Activated CD8-positive, alpha-beta T cell treated with anti-CD3 and anti-CD28 coated beads for 36 hours (primary cell): ENCODE measurements at regions of chr1 and their contacts with region 1.

Region 1: GRCh38 chr1:179809506-179810366 is 66.6 kb downstream of the FAM163A start:
- DNase-seq: peak; percentile 76
- ATAC-seq: peak; percentile 83
- H3K4me3 Mint-ChIP-seq: no peak overlapping the region
- H3K27ac Mint-ChIP-seq: no peak overlapping the region
- H3K4me1 Mint-ChIP-seq: peaks cover 4% of the 10 kb centered on the region
- H3K27me3 Mint-ChIP-seq: peaks cover 2% of the 10 kb centered on the region
- CTCF ChIP-seq: peak; percentile 87

Region 2: GRCh38 chr1:179706339-179706941 is 103.3 kb before region 1 on chr1:
- CTCF ChIA-PET with region 1: interaction called, 634 read pairs
- POLR2A ChIA-PET with region 1: interaction called, 7 read pairs
- intact Hi-C with region 1: loop called (anchors 1 kb)
- DNase-seq: peak; percentile 68
- ATAC-seq: no peak
- H3K4me3 Mint-ChIP-seq: no peak overlapping the region
- H3K27ac Mint-ChIP-seq: no peak overlapping the region
- H3K4me1 Mint-ChIP-seq: peaks cover 6% of the 10 kb centered on the region
- H3K27me3 Mint-ChIP-seq: no peaks in the 10 kb centered on the region
- CTCF ChIP-seq: peak; percentile 80

Region 3: DNA sequence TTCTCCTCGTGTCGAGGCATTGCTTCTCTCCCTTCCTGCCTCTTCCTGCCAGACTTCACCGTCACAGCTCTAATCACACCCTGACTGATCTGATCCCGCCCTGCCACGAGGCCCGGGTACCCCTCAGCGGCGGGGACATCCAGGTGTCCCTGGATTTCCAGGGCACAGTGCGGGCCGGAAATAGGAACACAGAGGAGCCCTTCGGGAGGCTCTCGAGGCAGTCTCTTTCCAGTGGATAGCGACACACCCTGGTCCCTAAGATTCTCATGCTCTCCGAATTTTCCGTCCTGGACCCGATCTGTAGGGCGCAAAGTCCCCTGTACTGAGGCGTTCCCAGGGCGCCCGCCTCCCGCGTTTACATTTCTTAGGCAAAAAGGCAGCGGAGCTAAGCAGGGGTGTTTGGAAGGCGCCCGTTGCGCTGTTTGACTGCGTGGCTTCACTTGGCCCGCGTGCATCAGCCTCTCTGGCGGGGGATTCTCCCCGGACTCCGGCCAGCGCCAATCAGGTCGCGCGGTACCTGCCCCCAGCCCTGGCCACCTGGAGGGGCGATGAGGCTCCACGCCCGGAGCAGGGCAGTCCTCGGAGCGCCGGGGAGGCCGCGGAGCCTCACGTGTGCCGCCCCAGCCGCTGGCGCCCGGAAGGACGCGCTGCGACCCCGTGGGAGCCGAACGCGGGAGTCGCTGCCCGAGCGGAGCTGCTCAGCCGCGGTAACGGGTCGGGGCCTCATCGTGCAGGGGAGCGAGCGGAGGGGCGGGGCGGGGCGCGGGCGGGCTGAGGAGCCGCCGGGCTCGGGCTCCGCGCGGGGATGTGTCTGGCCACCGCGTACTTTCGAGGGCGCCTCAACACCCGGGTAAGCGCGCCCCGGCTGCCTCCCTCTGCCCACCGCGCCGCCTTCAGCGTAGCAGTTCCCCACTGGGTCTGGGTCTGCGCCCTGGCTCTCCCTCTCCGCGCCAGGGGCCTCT is 66.7 kb before region 1 on chr1 and contains the start of gene FAM163A:
- CTCF ChIA-PET with region 1: interaction called, 20 read pairs
- POLR2A ChIA-PET with region 1: no interaction called
- intact Hi-C with region 1: no loop called
- DNase-seq: peak; percentile 20
- ATAC-seq: peak; percentile 42
- H3K4me3 Mint-ChIP-seq: peak within 1 kb of the TSS; percentile 2
- H3K27ac Mint-ChIP-seq: no peak within 1 kb of the TSS
- H3K4me1 Mint-ChIP-seq: peaks cover 5% of the 10 kb centered on the region
- H3K27me3 Mint-ChIP-seq: peaks cover 59% of the 10 kb centered on the region
- CTCF ChIP-seq: no peak
- total RNA-seq, gene FAM163A: not detected

Region 4: GRCh38 chr1:179785031-179785431 is 24.7 kb before region 1 on chr1:
- CTCF ChIA-PET with region 1: interaction called, 22 read pairs
- POLR2A ChIA-PET with region 1: no interaction called
- intact Hi-C with region 1: no loop called
- DNase-seq: no peak
- ATAC-seq: no peak
- H3K4me3 Mint-ChIP-seq: no peak overlapping the region
- H3K27ac Mint-ChIP-seq: no peak overlapping the region
- H3K4me1 Mint-ChIP-seq: no peaks in the 10 kb centered on the region
- H3K27me3 Mint-ChIP-seq: peaks cover 3% of the 10 kb centered on the region
- CTCF ChIP-seq: no peak

Region 5: GRCh38 chr1:179831852-179832699 is 22.3 kb after region 1 on chr1:
- CTCF ChIA-PET with region 1: interaction called, 28 read pairs
- POLR2A ChIA-PET with region 1: interaction called, 7 read pairs
- intact Hi-C with region 1: no loop called
- DNase-seq: peak; percentile 20
- ATAC-seq: peak; percentile 58
- H3K4me3 Mint-ChIP-seq: no peak overlapping the region
- H3K27ac Mint-ChIP-seq: peak overlapping the region; percentile 11
- H3K4me1 Mint-ChIP-seq: peaks cover 24% of the 10 kb centered on the region
- H3K27me3 Mint-ChIP-seq: no peaks in the 10 kb centered on the region
- CTCF ChIP-seq: no peak

Region 6: DNA sequence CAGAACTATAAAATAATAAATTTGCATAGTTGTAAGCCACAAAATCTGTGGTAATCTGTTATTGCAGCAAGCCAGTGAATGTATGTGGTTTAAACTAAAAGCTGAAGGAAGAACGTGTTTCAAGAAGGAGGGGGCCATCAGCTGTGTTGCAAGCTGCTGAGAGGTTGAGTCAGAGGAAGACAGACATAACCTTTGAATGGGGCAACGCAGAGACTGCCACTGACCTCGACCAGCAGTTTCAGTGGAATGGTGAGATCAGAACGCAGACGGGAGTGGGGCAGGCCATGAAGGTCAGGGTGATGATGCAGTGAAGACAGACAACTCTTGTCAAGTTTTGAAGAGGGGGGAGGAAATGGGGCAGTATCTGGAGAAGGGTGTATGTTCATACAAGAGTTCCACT is 321.8 kb after region 1 on chr1:
- CTCF ChIA-PET with region 1: no interaction called
- POLR2A ChIA-PET with region 1: no interaction called
- intact Hi-C with region 1: no loop called
- DNase-seq: peak; percentile 75
- ATAC-seq: peak; percentile 97
- H3K4me3 Mint-ChIP-seq: no peak overlapping the region
- H3K27ac Mint-ChIP-seq: peak overlapping the region; percentile 11
- H3K4me1 Mint-ChIP-seq: peaks cover 13% of the 10 kb centered on the region
- H3K27me3 Mint-ChIP-seq: peaks cover 16% of the 10 kb centered on the region
- CTCF ChIP-seq: no peak

Region 7: GRCh38 chr1:180178511-180179161 is 368.9 kb after region 1 on chr1:
- CTCF ChIA-PET with region 1: interaction called, 20 read pairs
- POLR2A ChIA-PET with region 1: no interaction called
- intact Hi-C with region 1: no loop called
- DNase-seq: peak; percentile 75
- ATAC-seq: peak; percentile 91
- H3K4me3 Mint-ChIP-seq: no peak overlapping the region
- H3K27ac Mint-ChIP-seq: no peak overlapping the region
- H3K4me1 Mint-ChIP-seq: no peaks in the 10 kb centered on the region
- H3K27me3 Mint-ChIP-seq: no peaks in the 10 kb centered on the region
- CTCF ChIP-seq: peak; percentile 94